ENCODE measurements at regions of chr14 and their contacts with region 1.

Region 1: GRCh38 chr14:104563742-104564615 is 15.6 kb upstream of the C14orf180 start:
- DNase-seq: peak; percentile 67
- H3K4me3 ChIP-seq: no peak overlapping the region
- H3K27ac ChIP-seq: no peak overlapping the region
- H3K4me1 ChIP-seq: no peaks in the 10 kb centered on the region
- H3K27me3 ChIP-seq: peaks cover 34% of the 10 kb centered on the region
- CTCF ChIP-seq: peak; percentile 75 to 89 (median 84)
- POLR2A ChIP-seq: no peak

Region 2: GRCh38 chr14:103657471-103657870 is 906.5 kb before region 1 on chr14:
- intact Hi-C with region 1: no loop called
- DNase-seq: no peak
- H3K4me3 ChIP-seq: no peak overlapping the region
- H3K27ac ChIP-seq: no peak overlapping the region
- H3K4me1 ChIP-seq: peaks cover 6% of the 10 kb centered on the region
- H3K27me3 ChIP-seq: no peaks in the 10 kb centered on the region
- CTCF ChIP-seq: no peak
- POLR2A ChIP-seq: no peak

Region 3: GRCh38 chr14:104078031-104078455 is 485.9 kb before region 1 on chr14:
- intact Hi-C with region 1: loop called (anchors 2 kb)
- DNase-seq: peak; percentile 85
- H3K4me3 ChIP-seq: no peak overlapping the region
- H3K27ac ChIP-seq: no peak overlapping the region
- H3K4me1 ChIP-seq: peaks cover 2% of the 10 kb centered on the region
- H3K27me3 ChIP-seq: no peaks in the 10 kb centered on the region
- CTCF ChIP-seq: peak; percentile 93 to 99 (median 98)
- POLR2A ChIP-seq: no peak

Region 4: GRCh38 chr14:105118656-105119403 is 554.9 kb after region 1 on chr14:
- intact Hi-C with region 1: no loop called
- DNase-seq: peak; percentile 85
- H3K4me3 ChIP-seq: no peak overlapping the region
- H3K27ac ChIP-seq: peak overlapping the region; percentile 44 to 68
- H3K4me1 ChIP-seq: peaks cover 9% of the 10 kb centered on the region
- H3K27me3 ChIP-seq: no peaks in the 10 kb centered on the region
- CTCF ChIP-seq: no peak
- POLR2A ChIP-seq: peak; percentile 16

Region 5: DNA sequence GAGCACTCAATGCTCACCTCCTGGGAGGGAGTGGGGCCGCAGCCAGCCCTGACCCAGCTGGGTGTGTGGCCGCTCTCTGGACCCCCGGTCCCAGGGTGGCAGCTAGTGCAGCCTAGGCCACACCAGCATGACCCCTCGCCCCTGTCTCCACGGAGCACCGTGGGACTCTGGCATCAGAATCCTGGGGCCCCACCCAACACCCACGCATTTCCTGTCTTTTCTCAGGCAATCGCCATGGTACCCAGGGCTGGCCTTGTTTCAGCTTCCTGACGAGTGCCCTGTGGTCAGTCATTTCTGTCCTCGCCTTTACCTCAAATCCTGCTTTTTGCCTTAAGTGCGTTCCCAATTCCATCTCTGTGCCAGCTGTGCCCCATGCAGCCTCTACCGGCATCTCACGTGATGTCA is 766.5 kb after region 1 on chr14:
- intact Hi-C with region 1: no loop called
- DNase-seq: no peak
- H3K4me3 ChIP-seq: no peak overlapping the region
- H3K27ac ChIP-seq: no peak overlapping the region
- H3K4me1 ChIP-seq: no peaks in the 10 kb centered on the region
- H3K27me3 ChIP-seq: no peaks in the 10 kb centered on the region
- CTCF ChIP-seq: no peak
- POLR2A ChIP-seq: no peak

Measured in prostate gland (tissue), 2 donors.